Mammary epithelial cell (primary cell): ENCODE measurements at regions of chr4 and their contacts with region 1.

Region 1: GRCh38 chr4:24753500-24753899 is 41.9 kb upstream of the SOD3 start:
- DNase-seq: peak; percentile 100
- H3K4me3 ChIP-seq: no peak overlapping the region
- H3K27ac ChIP-seq: peak overlapping the region; percentile 64
- H3K4me1 ChIP-seq: peaks cover 17% of the 10 kb centered on the region
- H3K27me3 ChIP-seq: no peaks in the 10 kb centered on the region
- CTCF ChIP-seq: no peak

Region 2: GRCh38 chr4:24470651-24471485 is 282.6 kb before region 1 on chr4:
- CTCF ChIA-PET with region 1: no interaction called
- dilution Hi-C with region 1: no loop called
- in situ Hi-C with region 1: no loop called
- intact Hi-C with region 1: no loop called
- DNase-seq: peak; percentile 35
- H3K4me3 ChIP-seq: peak overlapping the region in 2 of 3 experiments; percentile 33 to 37
- H3K27ac ChIP-seq: no peak overlapping the region
- H3K4me1 ChIP-seq: peaks cover 27% of the 10 kb centered on the region
- H3K27me3 ChIP-seq: peaks cover 23% of the 10 kb centered on the region
- CTCF ChIP-seq: no peak

Region 3: GRCh38 chr4:24664956-24665355 is 88.5 kb before region 1 on chr4:
- CTCF ChIA-PET with region 1: no interaction called
- dilution Hi-C with region 1: loop called (anchors 5 kb)
- in situ Hi-C with region 1: no loop called
- intact Hi-C with region 1: no loop called
- DNase-seq: peak; percentile 42
- H3K4me3 ChIP-seq: no peak overlapping the region
- H3K27ac ChIP-seq: no peak overlapping the region
- H3K4me1 ChIP-seq: no peaks in the 10 kb centered on the region
- H3K27me3 ChIP-seq: peaks cover 31% of the 10 kb centered on the region
- CTCF ChIP-seq: no peak

Region 4: GRCh38 chr4:24704149-24704548 is 49.4 kb before region 1 on chr4:
- CTCF ChIA-PET with region 1: no interaction called
- dilution Hi-C with region 1: no loop called
- in situ Hi-C with region 1: no loop called
- intact Hi-C with region 1: no loop called
- DNase-seq: no peak
- H3K4me3 ChIP-seq: no peak overlapping the region
- H3K27ac ChIP-seq: no peak overlapping the region
- H3K4me1 ChIP-seq: no peaks in the 10 kb centered on the region
- H3K27me3 ChIP-seq: peaks cover 2% of the 10 kb centered on the region
- CTCF ChIP-seq: no peak

Region 5: GRCh38 chr4:24768604-24769003 is 15.1 kb after region 1 on chr4:
- CTCF ChIA-PET with region 1: no interaction called
- dilution Hi-C with region 1: no loop called
- in situ Hi-C with region 1: no loop called
- intact Hi-C with region 1: loop called (anchors 1 kb)
- DNase-seq: no peak
- H3K4me3 ChIP-seq: no peak overlapping the region
- H3K27ac ChIP-seq: no peak overlapping the region
- H3K4me1 ChIP-seq: peaks cover 43% of the 10 kb centered on the region
- H3K27me3 ChIP-seq: no peaks in the 10 kb centered on the region
- CTCF ChIP-seq: no peak